ENCODE measurements at regions of chr1 and their contacts with region 1.

Region 1: DNA sequence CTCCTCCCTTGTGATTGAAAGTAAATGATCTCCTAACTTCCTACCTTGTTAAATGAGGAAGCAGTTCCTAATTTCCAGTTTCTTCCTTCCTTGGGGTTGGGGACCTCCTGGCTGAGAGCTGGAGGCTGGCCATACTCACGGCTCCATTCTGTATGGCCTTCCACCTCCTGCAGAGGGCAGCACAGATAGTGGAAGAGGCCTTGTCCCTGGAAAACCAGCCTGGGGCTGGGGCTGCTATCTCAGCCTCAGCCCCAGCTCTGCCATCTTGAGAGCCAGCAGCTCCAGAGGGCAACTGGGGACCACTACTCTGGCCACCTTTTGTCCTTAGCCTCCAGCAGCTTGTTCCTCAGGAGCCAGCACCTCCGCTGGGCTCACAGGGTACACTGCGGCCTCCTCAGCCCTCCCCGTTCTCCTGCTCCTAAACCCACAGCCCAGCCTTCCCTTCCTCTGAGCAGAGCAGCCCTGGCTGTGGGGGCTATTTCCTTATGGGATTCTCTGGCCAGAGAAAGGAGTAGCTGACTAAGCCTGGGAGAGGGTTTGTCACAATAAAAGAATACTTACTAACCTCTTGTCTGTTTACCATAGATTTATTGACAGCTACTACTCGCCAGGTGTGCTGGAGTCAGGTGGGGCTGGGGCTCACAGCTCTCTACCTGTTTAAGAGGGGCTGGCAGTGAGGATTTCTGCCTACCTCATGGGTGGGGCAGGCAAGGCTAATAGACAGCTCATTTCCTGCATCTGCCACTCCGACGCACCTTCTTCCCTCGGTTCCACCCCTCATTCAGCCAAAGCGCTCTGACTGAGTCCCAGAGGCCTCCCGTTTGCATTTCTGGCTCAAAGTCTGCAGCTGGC is 6.3 kb downstream of the TMEM234 start:
- DNase-seq: peak; percentile 45 to 65 (median 56)
- H3K4me3 ChIP-seq: no peak overlapping the region
- H3K4me3 Mint-ChIP-seq: peak overlapping the region in 3 of 8 donors; percentile 21 to 66 (median 58)
- H3K27ac ChIP-seq: no peak overlapping the region
- H3K27ac Mint-ChIP-seq: peak overlapping the region; percentile 38 to 90 (median 72)
- H3K4me1 ChIP-seq: peaks cover 17% of the 10 kb centered on the region
- H3K4me1 Mint-ChIP-seq: peaks cover 13 to 37% (median 25%) of the 10 kb centered on the region in 4 donors
- H3K27me3 ChIP-seq: no peaks in the 10 kb centered on the region
- H3K27me3 Mint-ChIP-seq: no peaks in the 10 kb centered on the region

Region 2: GRCh38 chr1:32200226-32201010 is 15.4 kb before region 1 on chr1 and contains the start of gene CCDC28B:
- CTCF ChIA-PET with region 1: interaction called, 31 read pairs
- POLR2A ChIA-PET with region 1: interaction called, 29 read pairs
- intact Hi-C with region 1: no loop called
- DNase-seq: peak; percentile 51 to 73 (median 58)
- H3K4me3 ChIP-seq: peak within 1 kb of the TSS; percentile 57 to 85
- H3K4me3 Mint-ChIP-seq: peak within 1 kb of the TSS; percentile 85 to 95 (median 92)
- H3K27ac ChIP-seq: peak within 1 kb of the TSS; percentile 84
- H3K27ac Mint-ChIP-seq: peak within 1 kb of the TSS; percentile 87 to 97 (median 95)
- H3K4me1 ChIP-seq: peaks cover 59% of the 10 kb centered on the region
- H3K4me1 Mint-ChIP-seq: peaks cover 38 to 76% (median 56%) of the 10 kb centered on the region in 4 donors
- H3K27me3 ChIP-seq: no peaks in the 10 kb centered on the region
- H3K27me3 Mint-ChIP-seq: no peaks in the 10 kb centered on the region
- total RNA-seq, gene CCDC28B: 4.2 to 5.1 TPM

Region 3: GRCh38 chr1:32247983-32248889 is 32.4 kb after region 1 on chr1:
- CTCF ChIA-PET with region 1: interaction called, 65 read pairs
- POLR2A ChIA-PET with region 1: interaction called, 21 read pairs
- intact Hi-C with region 1: no loop called
- DNase-seq: peak; percentile 63 to 75 (median 68)
- H3K4me3 ChIP-seq: peak overlapping the region; percentile 42
- H3K4me3 Mint-ChIP-seq: peak overlapping the region; percentile 82 to 100 (median 94)
- H3K27ac ChIP-seq: peak overlapping the region; percentile 89
- H3K27ac Mint-ChIP-seq: peak overlapping the region; percentile 91 to 99 (median 99)
- H3K4me1 ChIP-seq: peaks cover 52% of the 10 kb centered on the region
- H3K4me1 Mint-ChIP-seq: peaks cover 26 to 64% (median 37%) of the 10 kb centered on the region in 4 donors
- H3K27me3 ChIP-seq: no peaks in the 10 kb centered on the region
- H3K27me3 Mint-ChIP-seq: no peaks in the 10 kb centered on the region

Region 4: GRCh38 chr1:32307323-32307722 is 91.5 kb after region 1 on chr1:
- CTCF ChIA-PET with region 1: interaction called, 11 read pairs
- POLR2A ChIA-PET with region 1: no interaction called
- intact Hi-C with region 1: no loop called
- DNase-seq: no peak
- H3K4me3 ChIP-seq: no peak overlapping the region
- H3K4me3 Mint-ChIP-seq: peak overlapping the region in 2 of 8 donors; percentile 8 to 43
- H3K27ac ChIP-seq: peak overlapping the region; percentile 12
- H3K27ac Mint-ChIP-seq: peak overlapping the region; percentile 2 to 90 (median 44)
- H3K4me1 ChIP-seq: peaks cover 61% of the 10 kb centered on the region
- H3K4me1 Mint-ChIP-seq: peaks cover 48 to 78% (median 58%) of the 10 kb centered on the region in 4 donors
- H3K27me3 ChIP-seq: no peaks in the 10 kb centered on the region
- H3K27me3 Mint-ChIP-seq: no peaks in the 10 kb centered on the region

Region 5: DNA sequence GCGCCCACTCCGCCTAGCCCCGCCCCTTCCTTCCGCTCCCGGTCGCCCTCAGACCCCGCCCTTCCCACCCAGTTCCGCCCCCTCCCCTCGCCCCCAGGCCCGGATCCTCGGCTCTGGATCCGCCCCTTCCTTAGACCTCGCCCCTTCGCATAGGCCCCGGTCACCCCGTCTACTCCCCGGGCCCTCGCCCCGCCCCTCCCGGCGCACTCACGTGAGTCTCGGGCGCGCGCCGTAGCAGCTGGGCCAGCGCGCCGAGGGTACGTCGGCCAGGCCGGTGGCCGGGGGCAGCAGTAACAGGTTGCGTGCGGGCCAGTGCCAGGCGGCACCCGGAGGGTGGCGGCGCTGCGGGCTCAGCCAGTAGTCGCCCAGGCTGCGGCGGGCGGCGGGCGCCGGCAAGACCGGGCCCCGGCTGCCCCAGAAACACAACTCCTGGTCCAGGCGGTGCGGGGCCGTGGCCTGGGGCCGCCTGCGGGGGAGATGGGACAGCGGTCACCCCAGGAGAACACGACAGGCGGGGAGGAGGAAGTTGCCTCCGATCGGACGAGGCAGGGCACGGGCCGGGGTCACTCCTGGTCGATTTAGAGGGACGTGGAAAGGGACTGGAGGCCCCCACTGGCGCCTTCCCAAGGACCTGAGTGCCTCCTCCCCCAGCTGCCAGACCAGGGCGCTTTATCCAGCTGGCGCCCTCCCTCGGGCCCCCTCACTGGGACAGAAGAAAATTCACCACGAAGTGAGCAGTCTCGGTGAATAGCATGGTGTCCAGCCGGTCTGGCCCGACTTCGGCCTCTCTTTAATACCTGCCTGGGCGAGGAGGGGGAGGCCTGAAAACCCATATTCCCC is 135.8 kb after region 1 on chr1:
- CTCF ChIA-PET with region 1: interaction called, 10 read pairs
- POLR2A ChIA-PET with region 1: interaction called, 3 read pairs
- intact Hi-C with region 1: no loop called
- DNase-seq: peak; percentile 90 to 94 (median 91)
- H3K4me3 ChIP-seq: peak overlapping the region; percentile 52 to 65
- H3K4me3 Mint-ChIP-seq: peak overlapping the region; percentile 71 to 90 (median 82)
- H3K27ac ChIP-seq: peak overlapping the region; percentile 71
- H3K27ac Mint-ChIP-seq: peak overlapping the region; percentile 86 to 97 (median 92)
- H3K4me1 ChIP-seq: peaks cover 39% of the 10 kb centered on the region
- H3K4me1 Mint-ChIP-seq: peaks cover 22 to 62% (median 39%) of the 10 kb centered on the region in 4 donors
- H3K27me3 ChIP-seq: no peaks in the 10 kb centered on the region
- H3K27me3 Mint-ChIP-seq: no peaks in the 10 kb centered on the region

Region 6: GRCh38 chr1:32400876-32401631 is 185.2 kb after region 1 on chr1:
- CTCF ChIA-PET with region 1: interaction called, 24 read pairs
- POLR2A ChIA-PET with region 1: interaction called, 3 read pairs
- intact Hi-C with region 1: no loop called
- DNase-seq: peak in 4 of 5 donors; percentile 28 to 48 (median 35)
- H3K4me3 ChIP-seq: no peak overlapping the region
- H3K4me3 Mint-ChIP-seq: peak overlapping the region in 1 of 8 donors; percentile 54
- H3K27ac ChIP-seq: no peak overlapping the region
- H3K27ac Mint-ChIP-seq: peak overlapping the region in 1 of 7 donors; percentile 5
- H3K4me1 ChIP-seq: no peaks in the 10 kb centered on the region
- H3K4me1 Mint-ChIP-seq: peaks cover 0 to 1% (median 0%) of the 10 kb centered on the region in 4 donors
- H3K27me3 ChIP-seq: no peaks in the 10 kb centered on the region
- H3K27me3 Mint-ChIP-seq: peaks cover 1 to 2% of the 10 kb centered on the region in 2 donors

Region 7: GRCh38 chr1:32426489-32427255 is 210.8 kb after region 1 on chr1:
- CTCF ChIA-PET with region 1: no interaction called
- POLR2A ChIA-PET with region 1: no interaction called
- intact Hi-C with region 1: no loop called
- DNase-seq: no peak
- H3K4me3 ChIP-seq: no peak overlapping the region
- H3K4me3 Mint-ChIP-seq: peak overlapping the region in 1 of 8 donors; percentile 55
- H3K27ac ChIP-seq: no peak overlapping the region
- H3K27ac Mint-ChIP-seq: no peak overlapping the region
- H3K4me1 ChIP-seq: no peaks in the 10 kb centered on the region
- H3K4me1 Mint-ChIP-seq: peaks cover 0 to 4% (median 0%) of the 10 kb centered on the region in 4 donors
- H3K27me3 ChIP-seq: peaks cover 8% of the 10 kb centered on the region
- H3K27me3 Mint-ChIP-seq: peaks cover 27 to 37% of the 10 kb centered on the region in 2 donors

Measured in CD4-positive, alpha-beta memory T cell (primary cell).